HCT116 (cell line): ENCODE measurements at regions of chr10 and their contacts with region 1.

Region 1: GRCh38 chr10:13700486-13701144 is 113.8 kb downstream of the PRPF18 start:
- DNase-seq: no peak
- ATAC-seq: no peak
- H3K4me3 ChIP-seq: no peak overlapping the region
- H3K27ac ChIP-seq: no peak overlapping the region
- H3K4me1 ChIP-seq: peaks cover 0 to 3% of the 10 kb centered on the region in 2 experiments; a peak in 1 of 4 replicates
- H3K27me3 ChIP-seq: no peaks in the 10 kb centered on the region
- CTCF ChIP-seq: no peak
- POLR2A ChIP-seq: no peak
- RAD21 ChIP-seq: no peak

Region 2: GRCh38 chr10:13006037-13006436 is 694.6 kb before region 1 on chr10:
- CTCF ChIA-PET with region 1: no interaction called
- POLR2A ChIA-PET with region 1: no interaction called
- RAD21 ChIA-PET with region 1: no interaction called
- intact Hi-C with region 1: no loop called
- DNase-seq: no peak
- ATAC-seq: no peak
- H3K4me3 ChIP-seq: no peak overlapping the region
- H3K27ac ChIP-seq: no peak overlapping the region
- H3K4me1 ChIP-seq: peaks cover 5 to 9% of the 10 kb centered on the region in 2 experiments; a peak in 3 of 4 replicates
- H3K27me3 ChIP-seq: no peaks in the 10 kb centered on the region
- CTCF ChIP-seq: no peak
- POLR2A ChIP-seq: no peak
- RAD21 ChIP-seq: no peak

Region 3: GRCh38 chr10:13673156-13673555 is 27.5 kb before region 1 on chr10:
- CTCF ChIA-PET with region 1: no interaction called
- POLR2A ChIA-PET with region 1: no interaction called
- RAD21 ChIA-PET with region 1: no interaction called
- intact Hi-C with region 1: loop called (anchors 1 kb)
- DNase-seq: no peak
- ATAC-seq: no peak
- H3K4me3 ChIP-seq: no peak overlapping the region
- H3K27ac ChIP-seq: no peak overlapping the region
- H3K4me1 ChIP-seq: no peaks in the 10 kb centered on the region
- H3K27me3 ChIP-seq: no peaks in the 10 kb centered on the region
- CTCF ChIP-seq: no peak
- POLR2A ChIP-seq: no peak
- RAD21 ChIP-seq: no peak

Region 4: GRCh38 chr10:13712837-13713581 is 12.4 kb after region 1 on chr10:
- CTCF ChIA-PET with region 1: no interaction called
- POLR2A ChIA-PET with region 1: no interaction called
- RAD21 ChIA-PET with region 1: no interaction called
- intact Hi-C with region 1: no loop called
- DNase-seq: peak; percentile 44
- ATAC-seq: peak; percentile 82
- H3K4me3 ChIP-seq: peak overlapping the region in 1 of 2 experiments; percentile 33; a peak in 2 of 4 replicates
- H3K27ac ChIP-seq: no peak overlapping the region
- H3K4me1 ChIP-seq: peaks cover 17 to 26% of the 10 kb centered on the region in 2 experiments
- H3K27me3 ChIP-seq: no peaks in the 10 kb centered on the region
- CTCF ChIP-seq: no peak
- POLR2A ChIP-seq: no peak
- RAD21 ChIP-seq: no peak